Lower leg skin (tissue), 4 donors: ENCODE measurements at regions of chr3 and their contacts with region 1.

Region 1: DNA sequence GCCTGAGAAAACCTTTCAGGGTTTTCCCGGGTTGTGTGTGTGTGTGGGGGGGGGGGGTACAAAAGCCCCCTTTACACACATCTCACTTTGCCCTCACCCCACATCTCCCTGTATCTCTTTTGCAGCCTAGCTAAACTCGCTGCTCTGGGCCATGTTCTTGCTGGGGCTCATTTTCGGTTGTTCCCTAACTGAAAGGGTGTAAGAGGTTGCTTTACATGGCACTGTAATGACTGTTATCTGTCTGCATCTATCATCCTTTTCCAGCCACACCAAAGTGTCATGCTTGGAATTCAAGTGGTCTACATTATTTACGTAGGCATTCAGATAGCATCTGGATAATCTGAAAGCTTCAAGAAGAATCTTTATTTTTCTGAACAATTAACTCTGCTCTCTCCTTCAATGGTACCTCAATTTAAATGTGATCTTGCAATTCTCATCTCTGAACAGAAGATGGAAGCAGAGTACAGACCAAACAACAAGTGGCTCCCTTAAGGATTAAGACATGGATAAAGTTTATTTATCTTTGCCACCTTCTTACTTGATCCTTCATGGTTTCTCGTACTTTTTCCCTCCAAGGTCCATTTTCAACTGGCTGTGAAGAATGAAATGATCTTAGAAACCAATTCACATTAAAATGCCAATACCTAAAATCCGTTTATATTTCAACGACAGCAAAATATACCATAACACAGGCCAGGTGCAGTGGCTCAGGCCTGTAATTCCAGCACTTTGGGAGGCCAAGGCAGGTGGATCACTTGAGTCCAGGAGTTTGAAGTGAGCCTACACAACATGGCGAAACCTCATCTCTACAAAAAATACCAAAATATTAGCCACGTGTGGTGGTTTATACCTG is 34.9 kb downstream of the DCLK3 start:
- DNase-seq: no peak
- H3K4me3 ChIP-seq: no peak overlapping the region
- CTCF ChIP-seq: no peak
- POLR2A ChIP-seq: no peak

Region 2: DNA sequence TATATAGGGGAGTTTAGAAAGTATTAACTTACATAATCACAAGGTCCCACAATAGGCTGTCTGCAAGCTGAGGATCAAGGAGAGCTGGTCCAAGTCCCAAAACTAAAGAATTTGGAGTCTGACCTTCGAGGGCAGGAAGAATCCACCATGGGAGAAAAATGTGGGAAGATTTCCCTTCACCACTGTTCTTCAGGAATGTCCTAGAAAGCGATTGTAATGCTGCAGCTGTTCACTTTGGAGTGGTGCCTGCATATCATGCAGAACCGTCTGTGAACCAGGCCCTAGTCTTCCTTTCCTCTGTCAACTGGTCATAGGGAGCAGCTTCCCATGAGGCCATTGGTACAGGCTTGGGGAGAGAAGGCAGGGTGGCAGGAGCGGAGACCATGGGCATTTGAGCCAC is 1588.0 kb before region 1 on chr3:
- intact Hi-C with region 1: no loop called
- DNase-seq: no peak
- H3K4me3 ChIP-seq: no peak overlapping the region
- CTCF ChIP-seq: no peak
- POLR2A ChIP-seq: no peak

Region 3: DNA sequence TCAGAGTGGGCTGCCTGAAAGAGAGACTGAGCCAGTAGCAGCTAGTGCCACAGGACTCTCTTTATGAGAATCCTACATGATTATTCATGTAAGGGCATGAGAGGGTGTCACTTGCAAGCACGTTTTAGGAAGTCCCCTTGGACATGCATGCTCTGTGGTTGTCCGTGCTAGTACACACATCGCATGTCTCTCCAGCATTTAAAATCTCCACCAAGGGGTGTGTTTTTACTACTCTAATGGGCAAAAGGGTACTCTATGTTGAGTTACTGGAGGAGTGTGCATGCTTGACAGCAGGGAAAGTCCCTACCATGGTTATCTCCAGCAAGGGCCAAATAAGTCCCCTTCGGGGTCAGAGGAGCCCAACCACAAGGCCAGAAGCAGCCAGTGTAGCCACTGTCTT is 35.8 kb before region 1 on chr3:
- intact Hi-C with region 1: no loop called
- DNase-seq: no peak
- H3K4me3 ChIP-seq: no peak overlapping the region
- CTCF ChIP-seq: no peak
- POLR2A ChIP-seq: no peak

Region 4: DNA sequence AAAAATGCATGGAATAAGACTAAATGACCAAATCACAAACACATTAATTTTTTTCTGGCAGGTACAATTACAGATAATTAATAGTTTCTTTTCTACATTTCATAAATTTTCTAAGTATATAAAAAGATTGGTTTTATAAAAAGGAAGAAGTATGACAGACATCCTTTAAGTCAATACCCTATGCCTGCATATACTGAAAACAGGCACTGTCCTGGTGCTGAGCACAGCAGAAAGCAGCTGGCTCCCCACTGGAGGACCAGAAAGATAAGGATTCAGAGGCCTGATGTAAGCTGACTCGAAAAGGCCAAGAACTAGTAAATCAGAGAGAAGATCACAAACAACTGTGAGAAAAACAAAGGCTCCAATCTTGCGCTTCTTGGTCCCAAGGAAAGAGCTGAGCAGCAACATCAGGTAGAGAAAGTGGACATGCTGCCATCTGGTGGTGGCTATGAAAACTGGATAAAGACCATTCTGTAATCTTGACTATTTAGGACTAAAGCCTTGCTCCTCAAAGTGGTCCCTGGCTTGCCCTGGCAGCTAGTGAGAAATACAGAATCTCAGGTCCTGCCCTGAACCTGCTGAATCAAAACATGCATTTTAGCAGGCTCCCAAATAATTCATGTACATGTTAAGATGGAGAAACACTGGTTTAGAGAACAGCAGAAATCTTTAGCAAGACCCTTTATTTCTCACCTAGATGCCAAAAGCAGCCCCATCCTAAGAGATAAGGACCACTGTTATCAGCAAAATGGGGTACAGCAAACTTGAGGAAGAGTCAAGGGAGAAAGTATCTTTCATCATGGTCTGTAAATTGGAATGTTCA is 139.4 kb after region 1 on chr3:
- intact Hi-C with region 1: loop called (anchors 5 kb)
- DNase-seq: peak in 1 of 2 donors; percentile 53
- H3K4me3 ChIP-seq: no peak overlapping the region
- CTCF ChIP-seq: peak in 1 of 3 donors; percentile 43
- POLR2A ChIP-seq: no peak

Region 5: DNA sequence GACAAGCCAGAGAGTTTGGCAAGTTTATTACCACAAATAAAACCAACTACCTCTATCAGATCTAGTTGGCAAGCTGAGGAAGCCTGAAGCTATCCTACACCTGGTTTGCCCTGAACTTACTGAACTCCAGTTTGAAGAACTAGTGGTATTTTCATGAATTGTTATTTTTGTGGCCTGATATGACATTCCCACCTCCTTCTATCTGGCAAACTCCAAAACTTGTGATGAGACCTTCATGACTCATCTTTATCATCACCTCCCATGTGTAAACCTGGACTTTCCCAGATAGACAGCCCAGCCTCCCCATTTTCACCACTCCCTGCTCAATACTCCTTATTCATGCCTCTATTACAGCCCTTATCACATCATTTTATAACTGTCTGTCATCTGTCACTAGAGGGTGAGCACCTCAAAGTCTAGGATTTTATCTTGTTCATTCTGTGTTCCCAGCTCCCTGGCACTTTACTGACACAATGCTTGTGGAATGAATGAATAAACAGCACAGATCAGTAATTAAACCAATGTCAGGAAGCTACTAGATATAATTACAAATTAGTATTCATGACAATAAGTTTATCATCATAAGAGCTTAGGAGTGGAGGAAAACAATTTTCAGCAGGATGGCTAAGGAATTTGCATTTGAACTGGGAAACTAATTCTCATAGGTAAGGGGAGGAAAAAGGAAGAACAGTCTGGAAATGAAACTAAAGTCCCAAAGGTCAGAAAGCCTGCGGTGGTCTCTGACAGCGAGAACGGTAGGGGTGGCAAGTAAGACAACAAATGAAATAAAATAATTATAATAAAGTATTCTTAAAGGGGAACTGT is 228.6 kb after region 1 on chr3:
- intact Hi-C with region 1: loop called (anchors 10 kb)
- DNase-seq: no peak
- H3K4me3 ChIP-seq: no peak overlapping the region
- CTCF ChIP-seq: no peak
- POLR2A ChIP-seq: no peak